ENCODE measurements at regions of chr12 and their contacts with region 1.

Region 1: DNA sequence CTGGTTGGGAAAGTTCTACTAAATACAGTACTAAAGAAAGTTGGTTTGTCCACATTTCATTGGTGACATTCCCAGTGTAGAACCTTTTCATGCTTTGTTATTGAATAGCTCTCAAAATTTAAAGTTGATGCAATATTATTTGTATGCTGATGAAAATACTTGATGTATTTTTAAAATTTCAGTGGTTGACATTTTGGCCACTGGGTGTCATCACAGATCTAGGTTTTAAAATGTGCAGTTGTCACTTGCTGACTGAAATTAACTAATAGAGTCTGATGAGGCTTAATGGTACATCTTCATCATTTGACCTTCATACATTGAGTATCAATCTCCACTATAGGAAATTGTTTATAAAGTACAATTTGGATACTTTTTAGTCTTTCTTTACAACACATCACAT is 37.1 kb downstream of the CMAS start:
- DNase-seq: peak; percentile 30
- H3K4me3 ChIP-seq: no peak overlapping the region
- H3K27ac ChIP-seq: no peak overlapping the region
- H3K4me1 ChIP-seq: no peaks in the 10 kb centered on the region
- H3K27me3 ChIP-seq: no peaks in the 10 kb centered on the region
- CTCF ChIP-seq: peak in 1 of 2 donors; percentile 57

Region 2: GRCh38 chr12:22173177-22173576 is 90.0 kb after region 1 on chr12:
- CTCF ChIA-PET with region 1: interaction called, 9 read pairs
- dilution Hi-C with region 1: no loop called
- in situ Hi-C with region 1: no loop called
- intact Hi-C with region 1: loop called (anchors 1 kb)
- DNase-seq: no peak
- H3K4me3 ChIP-seq: no peak overlapping the region
- H3K27ac ChIP-seq: no peak overlapping the region
- H3K4me1 ChIP-seq: no peaks in the 10 kb centered on the region
- H3K27me3 ChIP-seq: no peaks in the 10 kb centered on the region
- CTCF ChIP-seq: peak; percentile 32 to 50